ENCODE measurements at regions of chr20 and their contacts with region 1.

Region 1: GRCh38 chr20:56554869-56555268 is 21.8 kb downstream of the FAM209B start:
- DNase-seq: peak; percentile 77 to 99
- H3K4me3 ChIP-seq: peak overlapping the region; percentile 25; the same call in 1 of the 2 replicates
- H3K27ac ChIP-seq: peak overlapping the region; percentile 76
- H3K4me1 ChIP-seq: peaks cover 27% of the 10 kb centered on the region
- H3K27me3 ChIP-seq: no peaks in the 10 kb centered on the region
- CTCF ChIP-seq: peak; percentile 45

Region 2: DNA sequence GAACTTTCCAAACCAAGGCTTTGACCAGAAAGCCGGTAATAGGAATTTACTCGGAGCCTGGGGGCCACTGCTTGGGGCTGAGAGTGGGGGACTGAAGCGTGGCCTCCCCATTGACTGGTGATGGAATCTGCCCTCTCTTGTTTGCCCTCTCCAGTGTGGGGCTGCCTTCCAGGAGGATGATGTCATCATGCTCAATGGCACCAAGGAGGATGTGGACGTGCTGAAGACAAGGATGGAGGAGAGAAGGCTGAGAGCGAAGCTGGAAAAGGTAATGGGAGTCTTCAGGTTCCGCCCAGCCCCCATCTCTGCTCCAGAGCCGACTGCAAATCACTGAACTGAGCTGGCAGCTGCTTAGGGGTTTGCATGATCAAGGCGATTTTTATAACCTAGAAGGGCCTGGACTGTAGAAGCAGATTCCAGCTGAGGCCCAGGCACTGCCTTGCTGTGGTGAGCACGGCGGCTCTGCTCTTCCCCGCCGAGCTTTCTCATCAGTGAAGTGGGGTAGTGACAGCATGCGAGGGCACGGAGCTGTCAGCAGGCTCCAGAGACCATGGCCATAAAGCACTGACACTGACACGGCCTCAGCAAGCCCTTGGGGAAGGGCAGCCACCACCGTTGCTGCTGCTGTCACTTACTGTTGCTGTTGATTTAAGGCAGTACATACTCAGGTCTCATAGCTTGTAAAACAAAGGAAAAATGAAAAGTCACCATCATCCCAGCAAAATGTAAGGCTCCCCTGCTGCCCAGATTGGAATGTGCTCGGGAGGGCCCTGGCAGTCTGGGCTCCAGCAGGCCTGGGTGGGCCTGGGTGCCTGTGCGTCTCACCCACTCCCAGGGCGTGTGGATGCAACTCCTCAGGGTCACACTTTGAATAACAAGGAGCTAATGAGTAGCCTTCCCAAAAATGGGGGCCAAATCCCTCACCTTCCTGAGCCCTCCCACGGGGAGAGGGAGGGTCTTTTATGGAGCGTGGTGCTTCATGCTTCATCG is 41.4 kb before region 1 on chr20:
- CTCF ChIA-PET with region 1: no interaction called
- POLR2A ChIA-PET with region 1: no interaction called
- intact Hi-C with region 1: no loop called
- DNase-seq: no peak
- H3K4me3 ChIP-seq: no peak overlapping the region
- H3K27ac ChIP-seq: no peak overlapping the region
- H3K4me1 ChIP-seq: no peaks in the 10 kb centered on the region
- H3K27me3 ChIP-seq: no peaks in the 10 kb centered on the region
- CTCF ChIP-seq: no peak

Region 3: DNA sequence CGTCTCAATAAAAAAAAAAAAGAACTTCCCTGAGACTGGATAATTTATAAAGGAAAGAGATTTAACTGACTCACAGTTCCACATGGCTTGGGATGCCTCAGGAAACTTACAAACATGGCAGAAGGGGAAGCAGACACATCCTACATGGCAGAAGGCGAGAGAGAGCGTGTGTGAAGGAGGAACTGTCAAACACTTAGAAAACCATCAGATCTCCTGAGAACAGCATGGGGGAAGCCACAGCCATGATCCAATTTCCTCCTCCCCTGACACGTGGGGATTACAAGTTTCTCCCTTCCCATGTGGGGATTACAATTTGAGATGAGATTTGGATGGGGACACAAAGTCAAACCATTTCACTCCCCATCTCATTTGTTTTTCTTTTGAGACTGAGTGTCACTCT is 27.7 kb after region 1 on chr20:
- CTCF ChIA-PET with region 1: interaction called, 13 read pairs
- POLR2A ChIA-PET with region 1: no interaction called
- intact Hi-C with region 1: loop called (anchors 1 kb)
- DNase-seq: no peak
- H3K4me3 ChIP-seq: no peak overlapping the region
- H3K27ac ChIP-seq: no peak overlapping the region
- H3K4me1 ChIP-seq: peaks cover 25% of the 10 kb centered on the region
- H3K27me3 ChIP-seq: no peaks in the 10 kb centered on the region
- CTCF ChIP-seq: no peak

Region 4: GRCh38 chr20:56616716-56617115 is 61.8 kb after region 1 on chr20:
- CTCF ChIA-PET with region 1: no interaction called
- POLR2A ChIA-PET with region 1: interaction called, 12 read pairs
- intact Hi-C with region 1: no loop called
- DNase-seq: no peak
- H3K4me3 ChIP-seq: no peak overlapping the region
- H3K27ac ChIP-seq: no peak overlapping the region
- H3K4me1 ChIP-seq: peaks cover 7% of the 10 kb centered on the region
- H3K27me3 ChIP-seq: no peaks in the 10 kb centered on the region
- CTCF ChIP-seq: no peak

Region 5: DNA sequence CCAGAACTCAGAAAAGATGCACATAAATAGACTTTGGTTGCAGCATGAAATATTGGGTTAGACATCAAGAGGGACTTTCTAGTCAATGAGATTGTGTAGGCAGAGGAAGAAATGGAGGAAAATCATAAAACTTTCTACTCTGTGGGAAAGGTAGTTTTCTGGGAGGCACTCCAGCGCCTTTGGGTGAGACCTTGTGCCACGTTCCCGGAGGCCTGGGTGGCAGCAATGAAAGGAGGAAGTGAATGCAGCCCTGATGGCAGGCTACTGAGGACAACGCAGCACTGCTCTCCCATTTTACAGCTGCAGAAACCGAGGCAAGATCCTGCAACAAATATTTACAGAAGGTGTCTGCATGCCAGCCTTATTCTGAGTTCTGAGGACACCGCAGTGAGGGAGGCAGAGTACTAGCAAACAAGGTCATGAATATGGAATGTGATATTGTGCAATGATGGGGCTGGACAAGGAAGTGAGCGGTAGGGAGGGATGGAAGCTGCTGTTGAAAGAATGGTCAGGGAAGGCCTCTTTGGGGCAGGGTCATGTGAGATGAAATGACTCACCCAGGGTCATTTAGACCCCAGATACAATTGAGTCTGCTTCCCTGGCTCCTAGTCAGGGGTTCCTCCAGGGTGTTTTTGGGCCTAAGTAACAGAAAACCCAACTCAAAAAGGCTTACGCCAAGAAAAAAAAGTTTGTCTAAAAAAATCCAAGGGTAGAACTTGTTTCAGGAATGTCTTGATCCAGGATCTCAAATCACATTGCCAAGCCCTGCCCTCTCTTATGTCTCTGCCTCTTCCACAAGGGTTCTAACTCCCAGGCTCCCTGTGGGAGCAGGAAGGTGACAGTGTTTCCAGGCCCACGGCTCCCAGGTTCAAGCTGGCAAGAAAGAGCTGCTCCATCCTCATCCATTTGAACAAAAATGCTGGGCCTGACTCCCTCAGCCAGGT is 233.4 kb after region 1 on chr20:
- CTCF ChIA-PET with region 1: interaction called, 4 read pairs
- POLR2A ChIA-PET with region 1: no interaction called
- intact Hi-C with region 1: loop called (anchors 5 kb)
- DNase-seq: peak; percentile 82 to 99
- H3K4me3 ChIP-seq: peak overlapping the region; percentile 12; the same call in 1 of the 2 replicates
- H3K27ac ChIP-seq: peak overlapping the region; percentile 96
- H3K4me1 ChIP-seq: peaks cover 46% of the 10 kb centered on the region
- H3K27me3 ChIP-seq: no peaks in the 10 kb centered on the region
- CTCF ChIP-seq: no peak

Region 6: GRCh38 chr20:56995576-56996075 is 440.8 kb after region 1 on chr20:
- CTCF ChIA-PET with region 1: no interaction called
- POLR2A ChIA-PET with region 1: no interaction called
- intact Hi-C with region 1: loop called (anchors 1 kb)
- DNase-seq: peak; percentile 47 to 55
- H3K4me3 ChIP-seq: no peak overlapping the region
- H3K27ac ChIP-seq: no peak overlapping the region
- H3K4me1 ChIP-seq: peaks cover 11% of the 10 kb centered on the region
- H3K27me3 ChIP-seq: no peaks in the 10 kb centered on the region
- CTCF ChIP-seq: peak; percentile 77

Region 7: GRCh38 chr20:57061058-57061900 is 506.4 kb after region 1 on chr20:
- CTCF ChIA-PET with region 1: interaction called, 4 read pairs
- POLR2A ChIA-PET with region 1: no interaction called
- intact Hi-C with region 1: loop called (anchors 2 kb)
- DNase-seq: peak in 1 of 2 experiments; percentile 23
- H3K4me3 ChIP-seq: no peak overlapping the region
- H3K27ac ChIP-seq: peak overlapping the region; percentile 53
- H3K4me1 ChIP-seq: peaks cover 39% of the 10 kb centered on the region
- H3K27me3 ChIP-seq: no peaks in the 10 kb centered on the region
- CTCF ChIP-seq: peak; percentile 54; the same call in 1 of the 2 replicates

Region 8: DNA sequence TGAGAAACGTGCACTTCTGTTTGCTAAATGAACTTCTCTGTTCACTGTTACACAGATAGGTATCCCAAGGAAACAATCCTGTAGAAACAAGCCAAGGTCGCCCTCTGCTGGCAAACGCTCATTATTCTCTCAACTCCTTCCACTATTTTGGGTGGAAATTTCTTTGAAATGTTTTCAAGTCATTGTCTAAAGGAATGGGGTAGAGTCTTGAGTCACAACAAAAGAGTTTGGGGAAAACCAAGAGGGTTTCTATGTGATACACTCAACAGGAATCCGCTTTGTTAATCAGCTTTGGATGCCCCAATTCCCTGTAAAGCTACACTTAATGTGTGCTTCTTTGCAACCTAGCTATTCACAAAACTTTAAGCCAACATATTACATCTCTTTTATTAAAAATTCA is 791.6 kb after region 1 on chr20:
- CTCF ChIA-PET with region 1: no interaction called
- POLR2A ChIA-PET with region 1: no interaction called
- intact Hi-C with region 1: loop called (anchors 5 kb)
- DNase-seq: peak; percentile 70 to 73
- H3K4me3 ChIP-seq: no peak overlapping the region
- H3K27ac ChIP-seq: no peak overlapping the region
- H3K4me1 ChIP-seq: peaks cover 10% of the 10 kb centered on the region; the same call in 1 of the 2 replicates
- H3K27me3 ChIP-seq: no peaks in the 10 kb centered on the region
- CTCF ChIP-seq: peak; percentile 93

Measured in PC-9 (cell line).